CD4-positive, alpha-beta memory T cell (primary cell): ENCODE measurements at regions of chr5 and their contacts with region 1.

Region 1: GRCh38 chr5:109819878-109820277 is 130.2 kb downstream of the MAN2A1 start:
- DNase-seq: no peak
- H3K4me3 ChIP-seq: no peak overlapping the region
- H3K4me3 Mint-ChIP-seq: no peak overlapping the region
- H3K27ac ChIP-seq: no peak overlapping the region
- H3K27ac Mint-ChIP-seq: peak overlapping the region in 2 of 7 donors; percentile 14 to 50
- H3K4me1 ChIP-seq: no peaks in the 10 kb centered on the region
- H3K4me1 Mint-ChIP-seq: peaks cover 0 to 3% (median 1%) of the 10 kb centered on the region in 4 donors
- H3K27me3 ChIP-seq: no peaks in the 10 kb centered on the region
- H3K27me3 Mint-ChIP-seq: no peaks in the 10 kb centered on the region

Region 2: DNA sequence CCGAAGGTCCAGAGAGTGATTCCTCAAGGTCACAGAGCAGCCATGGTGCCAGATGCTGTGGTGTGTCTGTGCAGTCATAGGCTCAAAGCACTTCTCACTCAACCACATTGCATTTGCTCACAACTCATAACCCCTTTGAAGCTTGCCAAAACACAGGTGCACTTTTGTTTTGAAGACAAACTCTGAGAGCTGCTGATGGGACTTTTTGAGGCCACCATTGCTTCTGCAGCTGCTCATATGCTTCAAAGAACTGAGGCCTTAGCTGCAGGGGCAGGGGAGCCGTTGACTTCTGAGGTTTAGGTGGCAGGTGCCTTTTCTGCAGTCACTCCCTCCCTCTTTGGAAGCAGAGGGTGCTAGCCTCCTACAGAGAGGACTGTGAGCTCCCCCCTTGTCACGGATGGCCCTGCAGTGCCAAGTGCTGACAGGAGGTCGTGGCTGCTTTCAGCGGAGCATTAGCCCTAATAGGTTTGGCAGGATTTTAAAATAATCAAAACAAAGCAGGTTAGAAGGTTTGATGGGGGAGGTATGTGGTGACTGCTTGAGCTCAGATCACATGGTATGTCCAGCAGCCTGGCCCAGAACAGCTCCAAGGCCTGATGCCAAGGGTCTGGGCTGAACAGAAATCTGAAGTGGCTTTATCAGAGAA is 102.0 kb after region 1 on chr5:
- CTCF ChIA-PET with region 1: no interaction called
- POLR2A ChIA-PET with region 1: no interaction called
- intact Hi-C with region 1: loop called (anchors 5 kb)
- DNase-seq: peak; percentile 70 to 81 (median 75)
- H3K4me3 ChIP-seq: peak overlapping the region in 1 of 2 donors; percentile 4
- H3K4me3 Mint-ChIP-seq: peak overlapping the region; percentile 57 to 81 (median 74)
- H3K27ac ChIP-seq: peak overlapping the region; percentile 37
- H3K27ac Mint-ChIP-seq: peak overlapping the region; percentile 85 to 97 (median 92)
- H3K4me1 ChIP-seq: peaks cover 44% of the 10 kb centered on the region
- H3K4me1 Mint-ChIP-seq: peaks cover 32 to 46% (median 39%) of the 10 kb centered on the region in 4 donors
- H3K27me3 ChIP-seq: no peaks in the 10 kb centered on the region
- H3K27me3 Mint-ChIP-seq: no peaks in the 10 kb centered on the region